ENCODE measurements at regions of chr2 and their contacts with region 1.

Region 1: DNA sequence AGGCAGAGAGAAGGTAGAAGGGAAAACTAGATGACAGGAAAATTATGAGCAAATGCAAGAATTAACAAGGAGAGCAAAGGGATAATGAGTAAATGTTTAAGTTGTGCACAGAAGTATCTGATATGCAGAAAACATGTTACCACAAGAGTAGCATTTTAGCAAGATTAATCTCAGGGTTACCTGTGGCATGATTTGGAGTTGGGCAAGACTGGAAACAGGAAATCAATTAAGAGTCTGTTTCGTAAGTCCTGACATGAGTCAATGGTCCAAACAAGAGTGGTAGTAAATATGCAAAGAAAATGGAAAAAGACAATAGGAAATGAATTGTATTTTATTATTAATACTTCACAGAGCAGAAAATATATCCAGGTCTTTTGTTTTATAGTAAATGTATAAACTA is 17.3 kb upstream of the MTX2 start:
- DNase-seq: no peak
- H3K4me3 ChIP-seq: no peak overlapping the region
- H3K27ac ChIP-seq: no peak overlapping the region
- H3K4me1 ChIP-seq: no peaks in the 10 kb centered on the region
- H3K27me3 ChIP-seq: no peaks in the 10 kb centered on the region
- CTCF ChIP-seq: no peak

Region 2: DNA sequence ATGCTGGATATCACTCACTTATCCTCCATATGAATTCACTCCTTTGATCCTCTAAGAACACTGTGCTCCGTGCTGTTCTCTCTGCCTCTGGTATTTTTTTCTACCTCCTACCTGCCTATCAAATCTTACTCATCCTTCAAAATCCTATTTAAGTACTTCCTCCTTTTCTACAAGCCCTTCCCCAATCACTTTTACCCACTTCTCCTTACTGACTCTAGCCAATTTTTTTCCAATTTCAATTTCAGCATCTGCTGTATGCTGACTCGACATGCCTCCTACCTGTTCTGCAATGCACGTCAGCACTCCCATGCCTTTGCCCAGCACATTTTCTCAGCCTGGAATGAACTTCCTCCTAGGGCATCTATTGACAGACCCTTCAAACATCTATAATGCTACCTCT is 212.6 kb before region 1 on chr2:
- intact Hi-C with region 1: no loop called
- DNase-seq: no peak
- H3K4me3 ChIP-seq: no peak overlapping the region
- H3K27ac ChIP-seq: no peak overlapping the region
- H3K4me1 ChIP-seq: no peaks in the 10 kb centered on the region
- H3K27me3 ChIP-seq: peaks cover 0 to 8% of the 10 kb centered on the region in 2 donors
- CTCF ChIP-seq: no peak

Region 3: DNA sequence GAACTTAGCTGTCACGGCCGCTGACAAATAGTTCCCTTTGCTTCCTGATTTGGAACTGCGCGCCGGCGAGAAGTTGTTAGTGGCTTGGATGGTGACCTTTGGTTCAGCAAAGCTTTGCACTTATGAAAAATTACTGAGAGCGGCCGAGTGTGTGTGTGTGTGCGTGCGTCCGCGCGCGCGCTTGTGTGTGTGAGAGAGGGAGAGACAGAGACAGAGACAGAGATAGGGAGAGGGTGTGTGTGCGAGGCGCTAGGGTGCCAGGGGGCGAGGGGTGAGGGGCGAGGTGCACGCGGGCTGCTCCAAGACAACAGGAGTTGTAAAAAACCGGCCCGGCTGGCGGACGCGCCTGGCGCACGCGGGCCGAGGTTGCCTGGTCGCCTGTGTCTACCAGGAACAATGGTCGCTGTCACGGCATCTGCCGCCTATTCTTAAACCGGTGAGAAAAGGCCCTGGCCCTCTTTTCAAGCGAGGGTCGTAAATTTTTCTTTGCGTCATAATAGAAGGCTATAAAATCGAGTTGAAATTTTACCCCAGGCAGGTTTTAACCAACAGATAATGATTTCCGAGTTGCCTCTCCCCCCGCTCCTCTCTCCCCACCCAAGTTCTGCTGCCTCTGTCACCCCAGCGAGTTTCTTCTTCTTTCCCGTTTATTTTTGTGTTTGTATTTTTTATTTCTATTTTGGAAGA is 94.3 kb before region 1 on chr2:
- intact Hi-C with region 1: loop called (anchors 10 kb)
- DNase-seq: no peak
- H3K4me3 ChIP-seq: no peak overlapping the region
- H3K27ac ChIP-seq: no peak overlapping the region
- H3K4me1 ChIP-seq: peaks cover 0 to 46% (median 33%) of the 10 kb centered on the region in 4 donors
- H3K27me3 ChIP-seq: peaks cover 0 to 70% of the 10 kb centered on the region in 2 donors
- CTCF ChIP-seq: no peak

Measured in tibial artery (tissue), 4 donors.